B cell (primary cell): ENCODE measurements at regions of chr18 and their contacts with region 1.

Region 1: DNA sequence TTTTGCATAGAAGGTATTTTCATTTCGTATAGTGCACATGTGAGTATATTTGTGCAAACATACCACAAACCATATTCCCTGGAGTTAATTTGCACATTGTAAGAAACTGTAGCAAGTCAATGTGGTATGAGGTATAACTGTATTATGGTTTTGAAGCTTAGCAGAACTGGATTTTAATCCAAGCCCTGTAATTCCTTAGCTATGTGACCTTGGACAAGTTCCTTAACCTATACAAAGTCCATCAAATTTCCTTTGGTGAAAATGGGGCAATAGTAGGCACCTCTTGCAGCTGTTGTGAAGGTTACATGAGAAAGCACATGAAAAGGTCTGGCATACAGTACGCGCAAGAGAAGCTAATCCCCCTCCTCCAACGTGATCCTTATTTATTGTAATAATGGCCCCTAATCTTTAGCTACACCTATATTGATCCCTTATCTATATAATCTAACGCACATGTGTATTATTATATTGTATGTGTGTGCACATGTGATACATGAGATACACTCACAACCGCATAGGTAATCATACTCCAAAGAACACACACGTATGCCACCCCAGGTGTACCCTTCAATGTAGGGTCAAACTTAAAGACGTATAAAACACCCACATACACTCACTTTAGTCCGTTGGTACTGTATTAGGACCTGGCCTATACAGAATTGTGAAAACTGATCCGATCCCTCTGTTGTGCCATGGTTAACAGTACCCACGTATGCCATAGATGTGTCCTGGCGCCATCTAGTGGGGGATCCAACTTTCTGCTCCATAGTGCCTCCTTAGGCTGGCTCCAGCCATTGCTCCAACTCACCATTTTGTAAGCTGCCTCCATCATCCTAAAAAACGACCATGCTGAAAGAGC is 402.9 kb upstream of the SLC14A2 start:
- DNase-seq: peak; percentile 90
- ATAC-seq: peak; percentile 99
- H3K4me3 ChIP-seq: no peak overlapping the region
- H3K4me3 Mint-ChIP-seq: no peak overlapping the region
- H3K27ac ChIP-seq: no peak overlapping the region
- H3K27ac Mint-ChIP-seq: no peak overlapping the region
- H3K4me1 ChIP-seq: peaks cover 0 to 6% of the 10 kb centered on the region in 2 donors
- H3K4me1 Mint-ChIP-seq: peaks cover 7% of the 10 kb centered on the region
- H3K27me3 ChIP-seq: no peaks in the 10 kb centered on the region
- H3K27me3 Mint-ChIP-seq: no peaks in the 10 kb centered on the region
- CTCF ChIP-seq: peak; percentile 100

Region 2: DNA sequence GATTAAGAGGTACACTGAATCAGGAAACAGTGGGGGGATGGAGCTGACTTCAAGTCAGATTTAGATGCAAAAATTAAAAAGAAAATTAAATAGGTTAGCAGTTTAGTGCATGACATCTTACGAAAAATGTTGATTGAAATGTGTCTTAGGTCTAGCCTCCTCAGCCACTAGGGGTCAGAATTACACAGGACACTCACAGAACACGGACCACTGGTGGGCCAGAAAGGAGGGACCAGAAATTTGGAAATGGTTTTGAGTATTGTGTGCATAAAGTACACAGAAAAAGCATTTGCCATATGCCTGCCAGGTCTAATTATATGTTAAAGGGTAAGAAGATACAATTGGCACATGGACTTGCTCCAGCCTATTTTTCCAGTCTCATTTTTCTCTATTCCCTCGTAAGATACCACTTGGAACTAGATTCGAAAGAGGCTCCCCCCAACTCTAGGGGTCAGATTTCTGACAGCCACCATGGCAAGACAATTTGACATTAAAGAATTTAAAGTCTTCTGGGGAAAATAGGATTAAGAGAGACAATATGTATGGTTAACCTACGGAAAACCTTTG is 1082.0 kb before region 1 on chr18:
- CTCF ChIA-PET with region 1: interaction called, 23 read pairs
- POLR2A ChIA-PET with region 1: no interaction called
- intact Hi-C with region 1: loop called (anchors 1 kb)
- DNase-seq: peak; percentile 62
- ATAC-seq: no peak
- H3K4me3 ChIP-seq: no peak overlapping the region
- H3K4me3 Mint-ChIP-seq: no peak overlapping the region
- H3K27ac ChIP-seq: no peak overlapping the region
- H3K27ac Mint-ChIP-seq: no peak overlapping the region
- H3K4me1 ChIP-seq: no peaks in the 10 kb centered on the region
- H3K4me1 Mint-ChIP-seq: peaks cover 7% of the 10 kb centered on the region
- H3K27me3 ChIP-seq: no peaks in the 10 kb centered on the region
- H3K27me3 Mint-ChIP-seq: peaks cover 4% of the 10 kb centered on the region
- CTCF ChIP-seq: peak; percentile 65

Region 3: DNA sequence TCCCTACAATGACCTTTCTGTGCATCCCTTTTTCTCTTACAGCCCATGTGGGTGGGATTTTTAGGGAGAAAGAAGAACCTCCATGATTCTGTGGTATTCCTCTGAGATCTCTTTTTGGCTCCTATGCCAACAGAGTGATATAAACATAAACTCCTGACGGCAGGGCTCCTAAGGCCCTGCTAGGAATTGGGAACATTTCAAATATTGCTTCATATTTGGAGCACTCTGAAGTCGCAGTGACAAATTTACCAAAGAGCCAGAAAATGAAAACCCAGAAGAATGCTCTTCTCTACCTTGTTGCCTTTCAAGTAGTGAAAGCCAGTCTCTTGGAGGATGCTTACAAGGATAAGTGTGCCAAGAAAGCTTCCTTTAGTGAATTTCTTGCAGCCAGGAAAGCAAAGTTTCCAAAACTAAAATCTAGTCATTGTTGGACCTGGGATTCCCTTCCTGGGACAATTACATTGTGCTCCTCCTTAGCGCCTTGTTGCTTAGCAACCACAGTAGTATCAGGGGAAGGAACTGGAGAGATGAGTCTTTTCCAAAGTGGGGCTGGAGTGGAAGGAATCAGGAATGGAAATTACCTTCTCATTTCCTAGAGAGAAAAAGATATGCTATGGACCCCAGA is 539.0 kb before region 1 on chr18:
- CTCF ChIA-PET with region 1: interaction called, 57 read pairs
- POLR2A ChIA-PET with region 1: no interaction called
- intact Hi-C with region 1: no loop called
- DNase-seq: no peak
- ATAC-seq: no peak
- H3K4me3 ChIP-seq: no peak overlapping the region
- H3K4me3 Mint-ChIP-seq: no peak overlapping the region
- H3K27ac ChIP-seq: no peak overlapping the region
- H3K27ac Mint-ChIP-seq: no peak overlapping the region
- H3K4me1 ChIP-seq: peaks cover 0 to 4% of the 10 kb centered on the region in 2 donors
- H3K4me1 Mint-ChIP-seq: peaks cover 10% of the 10 kb centered on the region
- H3K27me3 ChIP-seq: no peaks in the 10 kb centered on the region
- H3K27me3 Mint-ChIP-seq: no peaks in the 10 kb centered on the region
- CTCF ChIP-seq: no peak

Region 4: DNA sequence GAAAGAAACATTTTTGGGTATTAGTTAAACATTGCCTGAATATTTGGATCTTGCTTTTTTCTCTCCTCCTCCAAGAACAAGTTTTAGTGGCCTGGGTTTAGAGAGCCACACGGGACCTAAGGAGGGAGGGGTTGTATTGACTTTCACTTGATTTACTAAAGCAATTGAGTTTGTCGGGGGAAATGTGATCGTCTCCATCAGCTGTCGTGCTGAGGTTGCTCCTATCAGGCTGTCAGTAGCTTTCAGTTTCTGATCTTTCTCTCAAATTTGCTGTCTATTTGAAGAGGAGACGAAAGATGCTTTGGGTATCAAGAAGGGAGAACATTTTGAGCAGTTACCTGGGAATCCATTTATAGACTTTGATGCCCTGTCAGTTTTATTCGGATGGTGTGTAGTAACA is 425.7 kb before region 1 on chr18:
- CTCF ChIA-PET with region 1: interaction called, 3 read pairs
- POLR2A ChIA-PET with region 1: no interaction called
- intact Hi-C with region 1: loop called (anchors 10 kb)
- DNase-seq: peak; percentile 64
- ATAC-seq: peak; percentile 77
- H3K4me3 ChIP-seq: peak overlapping the region in 4 of 5 experiments; percentile 6 to 59 (median 45)
- H3K4me3 Mint-ChIP-seq: peak overlapping the region; percentile 92
- H3K27ac ChIP-seq: peak overlapping the region; percentile 50 to 79
- H3K27ac Mint-ChIP-seq: peak overlapping the region; percentile 93
- H3K4me1 ChIP-seq: peaks cover 48 to 50% of the 10 kb centered on the region in 2 donors
- H3K4me1 Mint-ChIP-seq: peaks cover 71% of the 10 kb centered on the region
- H3K27me3 ChIP-seq: no peaks in the 10 kb centered on the region
- H3K27me3 Mint-ChIP-seq: no peaks in the 10 kb centered on the region
- CTCF ChIP-seq: no peak

Region 5: DNA sequence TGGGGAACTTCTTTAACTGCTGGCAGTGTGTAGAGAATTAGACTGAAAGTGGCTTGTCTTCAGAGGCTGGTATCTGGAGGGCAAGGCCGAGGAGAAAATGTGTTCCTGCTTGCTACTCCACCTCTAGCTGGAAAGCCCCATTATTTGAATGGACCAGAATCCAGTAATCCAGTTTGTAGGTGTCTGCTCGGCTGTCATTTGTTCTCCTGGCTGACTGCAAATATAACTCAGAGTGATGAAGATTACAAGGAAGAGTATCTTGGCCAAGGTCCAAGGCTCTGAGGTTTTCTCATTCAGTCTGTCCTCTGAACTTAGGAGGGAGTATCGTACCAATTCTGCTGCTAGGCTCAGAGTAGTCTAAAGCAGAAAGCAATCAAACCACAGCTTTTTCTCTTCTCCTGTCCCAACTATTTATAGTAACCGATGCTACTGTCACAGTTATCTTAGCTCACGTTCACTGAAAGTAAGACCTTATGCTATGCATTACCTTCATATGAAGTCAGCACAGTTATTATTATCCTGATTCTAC is 303.2 kb before region 1 on chr18:
- CTCF ChIA-PET with region 1: interaction called, 3 read pairs
- POLR2A ChIA-PET with region 1: no interaction called
- intact Hi-C with region 1: loop called (anchors 10 kb)
- DNase-seq: peak; percentile 25
- ATAC-seq: peak; percentile 57
- H3K4me3 ChIP-seq: no peak overlapping the region
- H3K4me3 Mint-ChIP-seq: peak overlapping the region; percentile 30
- H3K27ac ChIP-seq: peak overlapping the region; percentile 20 to 72
- H3K27ac Mint-ChIP-seq: peak overlapping the region; percentile 70
- H3K4me1 ChIP-seq: peaks cover 38 to 39% of the 10 kb centered on the region in 2 donors
- H3K4me1 Mint-ChIP-seq: peaks cover 62% of the 10 kb centered on the region
- H3K27me3 ChIP-seq: no peaks in the 10 kb centered on the region
- H3K27me3 Mint-ChIP-seq: no peaks in the 10 kb centered on the region
- CTCF ChIP-seq: no peak

Region 6: DNA sequence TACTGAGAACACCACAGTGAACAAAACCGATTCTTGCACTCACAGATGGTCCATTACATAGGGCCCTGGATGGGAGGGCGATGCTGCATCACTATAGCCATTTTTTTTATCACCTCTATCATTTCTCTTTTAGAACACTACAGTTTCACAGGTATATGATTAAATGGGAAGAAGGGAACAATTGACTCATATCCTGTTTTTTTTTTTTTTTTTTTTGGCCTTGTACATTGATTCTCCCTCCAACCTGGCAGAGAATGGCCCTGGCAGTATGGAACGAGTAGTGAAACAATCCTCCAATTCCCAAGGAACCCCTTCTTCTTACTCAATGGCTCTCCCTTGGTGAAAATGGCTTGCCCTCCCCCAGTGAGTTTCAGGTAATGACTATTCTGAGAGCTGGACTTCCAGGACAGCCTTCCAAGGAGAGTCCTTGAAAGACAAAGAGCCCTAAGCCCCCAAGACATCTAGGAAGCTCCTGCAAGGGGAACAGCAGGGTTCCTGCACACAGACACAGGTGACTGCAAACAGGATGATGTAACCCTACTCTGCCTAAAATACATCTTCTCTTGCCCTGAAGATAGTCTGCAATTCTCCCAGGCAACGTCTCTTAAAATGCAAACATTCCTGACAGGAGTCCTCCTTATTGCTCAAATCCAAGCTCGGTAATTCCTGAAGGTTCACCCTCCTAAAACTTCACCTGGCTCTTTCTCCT is 126.3 kb before region 1 on chr18:
- CTCF ChIA-PET with region 1: interaction called, 14 read pairs
- POLR2A ChIA-PET with region 1: no interaction called
- intact Hi-C with region 1: no loop called
- DNase-seq: no peak
- ATAC-seq: no peak
- H3K4me3 ChIP-seq: no peak overlapping the region
- H3K4me3 Mint-ChIP-seq: no peak overlapping the region
- H3K27ac ChIP-seq: no peak overlapping the region
- H3K27ac Mint-ChIP-seq: no peak overlapping the region
- H3K4me1 ChIP-seq: peaks cover 5 to 13% of the 10 kb centered on the region in 2 donors
- H3K4me1 Mint-ChIP-seq: peaks cover 3% of the 10 kb centered on the region
- H3K27me3 ChIP-seq: no peaks in the 10 kb centered on the region
- H3K27me3 Mint-ChIP-seq: no peaks in the 10 kb centered on the region
- CTCF ChIP-seq: no peak

Region 7: GRCh38 chr18:45270289-45270771 is 57.9 kb after region 1 on chr18:
- CTCF ChIA-PET with region 1: no interaction called
- POLR2A ChIA-PET with region 1: no interaction called
- intact Hi-C with region 1: no loop called
- DNase-seq: no peak
- ATAC-seq: no peak
- H3K4me3 ChIP-seq: no peak overlapping the region
- H3K4me3 Mint-ChIP-seq: no peak overlapping the region
- H3K27ac ChIP-seq: no peak overlapping the region
- H3K27ac Mint-ChIP-seq: no peak overlapping the region
- H3K4me1 ChIP-seq: no peaks in the 10 kb centered on the region
- H3K4me1 Mint-ChIP-seq: no peaks in the 10 kb centered on the region
- H3K27me3 ChIP-seq: peaks cover 0 to 2% (median 0%) of the 10 kb centered on the region in 4 experiments
- H3K27me3 Mint-ChIP-seq: peaks cover 38% of the 10 kb centered on the region
- CTCF ChIP-seq: no peak

Region 8: GRCh38 chr18:45320724-45321123 is 108.3 kb after region 1 on chr18:
- CTCF ChIA-PET with region 1: no interaction called
- POLR2A ChIA-PET with region 1: no interaction called
- intact Hi-C with region 1: no loop called
- DNase-seq: no peak
- ATAC-seq: no peak
- H3K4me3 ChIP-seq: no peak overlapping the region
- H3K4me3 Mint-ChIP-seq: no peak overlapping the region
- H3K27ac ChIP-seq: no peak overlapping the region
- H3K27ac Mint-ChIP-seq: no peak overlapping the region
- H3K4me1 ChIP-seq: no peaks in the 10 kb centered on the region
- H3K4me1 Mint-ChIP-seq: no peaks in the 10 kb centered on the region
- H3K27me3 ChIP-seq: no peaks in the 10 kb centered on the region
- H3K27me3 Mint-ChIP-seq: peaks cover 9% of the 10 kb centered on the region
- CTCF ChIP-seq: no peak

Region 9: GRCh38 chr18:45540125-45540524 is 327.7 kb after region 1 on chr18:
- CTCF ChIA-PET with region 1: no interaction called
- POLR2A ChIA-PET with region 1: no interaction called
- intact Hi-C with region 1: no loop called
- DNase-seq: no peak
- ATAC-seq: no peak
- H3K4me3 ChIP-seq: no peak overlapping the region
- H3K4me3 Mint-ChIP-seq: no peak overlapping the region
- H3K27ac ChIP-seq: no peak overlapping the region
- H3K27ac Mint-ChIP-seq: no peak overlapping the region
- H3K4me1 ChIP-seq: no peaks in the 10 kb centered on the region
- H3K4me1 Mint-ChIP-seq: no peaks in the 10 kb centered on the region
- H3K27me3 ChIP-seq: no peaks in the 10 kb centered on the region
- H3K27me3 Mint-ChIP-seq: peaks cover 12% of the 10 kb centered on the region
- CTCF ChIP-seq: no peak